ENCODE measurements at regions of chr1 and their contacts with region 1.

Region 1: GRCh38 chr1:78839704-78840277 is 166.7 kb downstream of the ADGRL4 start:
- DNase-seq: no peak
- H3K4me3 ChIP-seq: no peak overlapping the region
- H3K27ac ChIP-seq: no peak overlapping the region
- H3K4me1 ChIP-seq: no peaks in the 10 kb centered on the region
- H3K27me3 ChIP-seq: no peaks in the 10 kb centered on the region
- CTCF ChIP-seq: peak in 2 of 3 experiments; percentile 32 to 56

Region 2: DNA sequence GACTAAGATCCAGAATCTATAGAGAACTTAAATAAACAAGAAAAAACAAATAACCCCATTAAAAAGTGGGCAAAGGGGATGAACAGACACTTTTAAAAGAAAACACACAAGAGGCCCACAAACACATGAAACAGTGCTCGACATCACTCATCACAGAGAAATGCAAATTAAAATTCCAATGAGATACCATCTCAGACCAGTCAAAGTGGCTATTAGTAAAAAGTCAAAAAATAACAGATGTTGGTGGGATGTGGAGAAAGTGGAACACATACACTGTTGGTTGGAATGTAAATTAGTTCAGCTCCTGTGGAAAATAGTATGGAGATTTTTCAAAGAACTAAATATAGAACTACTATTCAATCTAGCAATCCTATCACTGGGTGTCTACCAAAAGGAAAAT is 47.0 kb before region 1 on chr1:
- intact Hi-C with region 1: no loop called
- DNase-seq: no peak
- H3K4me3 ChIP-seq: no peak overlapping the region
- H3K27ac ChIP-seq: no peak overlapping the region
- H3K4me1 ChIP-seq: no peaks in the 10 kb centered on the region
- H3K27me3 ChIP-seq: no peaks in the 10 kb centered on the region
- CTCF ChIP-seq: no peak

Region 3: DNA sequence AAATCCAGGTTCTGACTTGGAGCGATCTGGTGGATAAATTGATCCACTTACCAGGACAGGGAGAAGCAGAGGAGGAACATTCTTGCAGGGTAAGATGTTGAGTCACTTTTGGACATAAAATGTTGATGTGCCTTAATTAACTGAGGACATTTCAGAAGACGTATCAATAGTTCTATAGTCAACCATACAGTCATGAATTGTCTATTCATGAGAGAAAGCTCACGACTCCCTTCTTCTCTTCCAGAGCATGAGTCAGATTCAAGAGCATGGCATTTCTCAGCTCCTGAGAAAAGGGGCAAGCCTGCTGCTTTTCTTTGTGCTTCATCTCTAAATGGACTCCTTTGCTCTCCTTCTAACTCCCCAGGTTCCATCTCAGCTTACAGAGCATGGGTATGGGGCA is 111.0 kb after region 1 on chr1:
- intact Hi-C with region 1: no loop called
- DNase-seq: no peak
- H3K4me3 ChIP-seq: no peak overlapping the region
- H3K27ac ChIP-seq: no peak overlapping the region
- H3K4me1 ChIP-seq: no peaks in the 10 kb centered on the region
- H3K27me3 ChIP-seq: no peaks in the 10 kb centered on the region
- CTCF ChIP-seq: no peak

Region 4: GRCh38 chr1:79197421-79197820 is 357.6 kb after region 1 on chr1:
- intact Hi-C with region 1: loop called (anchors 5 kb)
- DNase-seq: no peak
- H3K4me3 ChIP-seq: no peak overlapping the region
- H3K27ac ChIP-seq: no peak overlapping the region
- H3K4me1 ChIP-seq: no peaks in the 10 kb centered on the region
- H3K27me3 ChIP-seq: no peaks in the 10 kb centered on the region
- CTCF ChIP-seq: peak in 1 of 3 experiments; percentile 11